Psoas muscle (tissue), 8 donors: ENCODE measurements at regions of chr12 and their contacts with region 1.

Region 1: GRCh38 chr12:30978639-30979038 is 52.1 kb downstream of the TSPAN11 start:
- DNase-seq: no peak
- ATAC-seq: no peak
- H3K4me3 ChIP-seq: no peak overlapping the region
- H3K27ac ChIP-seq: no peak overlapping the region
- H3K4me1 ChIP-seq: no peaks in the 10 kb centered on the region
- H3K27me3 ChIP-seq: peaks cover 0 to 4% (median 0%) of the 10 kb centered on the region in 3 donors
- CTCF ChIP-seq: no peak

Region 2: GRCh38 chr12:32647275-32647674 is 1668.6 kb after region 1 on chr12:
- intact Hi-C with region 1: loop called in 1 of 2 experiments (anchors 5 kb)
- DNase-seq: no peak
- ATAC-seq: peak in 1 of 4 donors; percentile 67
- H3K4me3 ChIP-seq: no peak overlapping the region
- H3K27ac ChIP-seq: no peak overlapping the region
- H3K4me1 ChIP-seq: no peaks in the 10 kb centered on the region
- H3K27me3 ChIP-seq: no peaks in the 10 kb centered on the region
- CTCF ChIP-seq: no peak